Vagina (tissue), 2 donors: ENCODE measurements at regions of chr4 and their contacts with region 1.

Region 1: DNA sequence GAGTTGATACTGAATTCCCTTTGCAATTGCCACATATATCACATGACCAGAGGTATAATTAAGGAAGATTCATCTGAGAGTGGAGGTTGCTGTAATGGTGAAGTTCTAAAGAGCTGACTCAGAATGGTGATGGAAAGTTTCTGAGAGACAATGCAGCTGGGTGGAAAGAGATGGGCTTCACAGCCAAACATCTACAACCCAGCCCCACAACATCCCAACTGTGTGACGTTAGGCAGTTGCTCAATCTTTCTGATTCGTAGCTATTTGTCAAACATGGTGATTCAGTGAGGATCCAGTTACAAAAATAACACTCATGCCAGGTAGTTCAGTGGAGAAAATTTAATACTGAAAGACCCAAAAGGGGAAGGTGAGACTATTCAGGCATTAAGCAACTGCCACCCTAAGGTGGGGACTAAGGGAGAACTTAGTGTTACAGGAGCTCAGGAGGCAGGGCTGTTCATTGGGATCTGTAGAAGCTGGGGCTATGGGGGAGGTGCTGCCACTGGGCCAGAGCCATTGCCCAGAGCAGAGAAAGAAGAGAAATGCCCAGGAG is 6.9 kb upstream of the AFF1 start:
- DNase-seq: peak in 1 of 2 donors; percentile 94
- H3K4me3 ChIP-seq: no peak overlapping the region
- H3K27ac ChIP-seq: peak overlapping the region; percentile 74
- H3K4me1 ChIP-seq: peaks cover 11% of the 10 kb centered on the region
- H3K27me3 ChIP-seq: no peaks in the 10 kb centered on the region
- CTCF ChIP-seq: no peak
- POLR2A ChIP-seq: no peak

Region 2: DNA sequence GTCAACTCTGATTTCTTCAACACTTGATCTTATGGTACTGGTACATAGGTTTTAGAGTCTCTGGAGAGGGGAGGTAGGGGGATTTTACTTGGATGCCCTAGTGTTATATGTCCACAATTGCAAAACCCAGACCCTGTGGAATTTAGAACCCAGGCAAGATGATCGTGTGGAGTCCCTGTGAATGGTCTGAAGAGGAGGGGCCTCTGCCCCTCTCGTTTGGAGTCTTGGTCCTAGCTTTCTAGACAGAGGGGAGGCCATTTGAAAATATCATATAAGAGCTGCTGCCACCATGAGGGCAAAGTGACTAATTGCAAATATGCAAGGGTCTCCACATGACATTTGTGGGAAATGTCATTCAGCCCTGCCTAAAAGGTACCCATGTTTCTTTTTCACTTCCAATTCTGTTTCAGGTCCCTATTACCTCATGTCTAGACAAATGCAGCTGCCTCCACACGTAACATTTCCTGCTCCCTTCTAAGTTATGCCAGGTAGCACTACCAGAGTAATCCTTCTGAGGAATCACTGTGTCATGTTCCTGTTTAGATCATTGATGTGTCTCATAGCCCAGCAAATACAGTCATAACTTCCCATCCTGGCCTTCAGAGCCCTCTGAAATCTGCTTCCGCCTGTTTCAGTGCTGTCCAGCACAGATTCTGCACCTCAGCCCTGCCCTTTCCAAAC is 165.7 kb after region 1 on chr4:
- intact Hi-C with region 1: loop called (anchors 5 kb)
- DNase-seq: no peak
- H3K4me3 ChIP-seq: no peak overlapping the region
- H3K27ac ChIP-seq: no peak overlapping the region
- H3K4me1 ChIP-seq: peaks cover 37% of the 10 kb centered on the region
- H3K27me3 ChIP-seq: no peaks in the 10 kb centered on the region
- CTCF ChIP-seq: peak in 2 of 3 experiments; percentile 26 to 50
- POLR2A ChIP-seq: no peak